Transverse colon (tissue), 4 donors: ENCODE measurements at regions of chr9 and their contacts with region 1.

Region 1: GRCh38 chr9:81874931-81875330 is 53.3 kb upstream of the SPATA31D4 start:
- DNase-seq: peak; percentile 20
- H3K4me3 ChIP-seq: no peak overlapping the region
- H3K27ac ChIP-seq: peak overlapping the region; percentile 39 to 80 (median 56)
- H3K4me1 ChIP-seq: peaks cover 0 to 41% (median 17%) of the 10 kb centered on the region in 4 donors
- H3K27me3 ChIP-seq: no peaks in the 10 kb centered on the region
- CTCF ChIP-seq: no peak
- EP300 ChIP-seq: no peak
- POLR2A ChIP-seq: no peak

Region 2: DNA sequence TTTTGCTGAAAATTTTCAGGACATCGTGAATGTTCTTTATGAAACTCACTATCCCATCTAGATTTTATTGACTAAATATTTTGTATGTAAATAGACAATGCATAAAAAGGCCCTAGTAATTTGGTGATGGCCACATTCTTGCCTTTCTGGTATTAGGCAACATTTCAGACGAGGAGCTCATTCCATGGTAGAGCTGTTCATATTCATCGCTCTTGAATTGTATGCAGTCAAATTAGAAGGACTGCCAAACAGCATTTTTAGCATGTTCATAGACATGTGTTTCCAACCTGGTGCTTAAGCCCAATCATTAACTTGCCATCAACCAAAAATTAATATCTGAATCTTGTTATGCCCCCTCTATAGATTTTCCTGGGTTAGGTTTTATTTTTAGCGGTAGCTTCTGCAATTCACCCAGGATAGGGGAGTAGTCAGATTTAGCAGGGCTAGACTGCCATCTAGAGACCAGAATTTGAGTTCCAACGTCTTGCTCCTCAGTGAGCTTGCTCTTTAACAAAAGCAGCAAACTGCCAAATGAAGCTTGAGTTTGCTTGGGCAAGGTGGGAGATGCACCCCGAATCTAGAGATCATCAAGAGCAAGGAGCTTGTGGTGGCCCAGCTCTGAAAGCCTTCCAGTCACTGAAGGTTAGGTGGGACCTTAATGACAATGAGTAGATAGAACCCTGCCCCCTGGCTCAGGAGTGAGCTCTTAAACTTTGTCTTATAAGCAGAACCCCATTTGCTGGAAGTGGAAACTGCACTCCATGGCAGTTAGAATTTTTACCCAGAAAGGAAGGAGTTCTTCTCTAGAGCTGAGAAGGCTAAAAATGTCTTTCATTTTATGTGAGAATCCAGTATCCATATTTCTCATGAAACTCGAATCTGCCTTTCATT is 731.8 kb after region 1 on chr9:
- in situ Hi-C with region 1: loop called in 1 of 4 experiments (anchors 25 kb)
- intact Hi-C with region 1: no loop called
- DNase-seq: peak; percentile 47
- H3K4me3 ChIP-seq: no peak overlapping the region
- H3K27ac ChIP-seq: no peak overlapping the region
- H3K4me1 ChIP-seq: peaks cover 0 to 25% (median 2%) of the 10 kb centered on the region in 4 donors
- H3K27me3 ChIP-seq: no peaks in the 10 kb centered on the region
- CTCF ChIP-seq: peak; percentile 52 to 66 (median 61)
- EP300 ChIP-seq: no peak
- POLR2A ChIP-seq: no peak